Activated naive CD4-positive, alpha-beta T cell treated with anti-CD3 and anti-CD28 coated beads for 36 hours (primary cell): ENCODE measurements at regions of chr1 and their contacts with region 1.

Region 1: DNA sequence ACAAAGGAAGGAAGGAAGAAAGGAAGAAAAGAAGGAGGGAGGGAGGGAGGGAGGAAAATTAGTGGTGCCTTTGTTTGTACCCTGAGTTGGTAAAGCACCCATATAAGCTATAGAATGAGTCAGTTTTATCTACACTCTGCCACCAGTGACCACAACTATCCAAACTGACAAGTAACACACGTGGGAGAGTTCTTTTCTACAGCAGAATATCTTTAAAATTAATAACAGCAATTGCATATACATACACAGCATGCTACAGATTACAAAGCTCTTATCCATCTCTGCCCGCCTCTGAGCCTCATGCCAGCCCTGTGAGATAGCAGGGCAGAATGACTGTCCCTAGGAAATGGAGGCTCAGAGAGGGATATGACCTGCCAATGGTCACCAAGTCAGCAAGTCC is 20.3 kb downstream of the CDCP2 start:
- DNase-seq: no peak
- H3K4me3 Mint-ChIP-seq: no peak overlapping the region
- H3K27ac Mint-ChIP-seq: no peak overlapping the region
- H3K4me1 Mint-ChIP-seq: no peaks in the 10 kb centered on the region
- H3K27me3 Mint-ChIP-seq: no peaks in the 10 kb centered on the region

Region 2: GRCh38 chr1:54180701-54181360 is 48.3 kb after region 1 on chr1:
- CTCF ChIA-PET with region 1: no interaction called
- intact Hi-C with region 1: loop called (anchors 5 kb)
- DNase-seq: no peak
- H3K4me3 Mint-ChIP-seq: no peak overlapping the region
- H3K27ac Mint-ChIP-seq: no peak overlapping the region
- H3K4me1 Mint-ChIP-seq: no peaks in the 10 kb centered on the region
- H3K27me3 Mint-ChIP-seq: no peaks in the 10 kb centered on the region